AG04450 (cell line): ENCODE measurements at regions of chr18 and their contacts with region 1.

Region 1: GRCh38 chr18:38367473-38367872 is 801.9 kb upstream of the CELF4 start:
- DNase-seq: no peak
- H3K4me3 ChIP-seq: no peak overlapping the region
- H3K27ac ChIP-seq: no peak overlapping the region
- H3K27me3 ChIP-seq: no peaks in the 10 kb centered on the region
- CTCF ChIP-seq: no peak

Region 2: DNA sequence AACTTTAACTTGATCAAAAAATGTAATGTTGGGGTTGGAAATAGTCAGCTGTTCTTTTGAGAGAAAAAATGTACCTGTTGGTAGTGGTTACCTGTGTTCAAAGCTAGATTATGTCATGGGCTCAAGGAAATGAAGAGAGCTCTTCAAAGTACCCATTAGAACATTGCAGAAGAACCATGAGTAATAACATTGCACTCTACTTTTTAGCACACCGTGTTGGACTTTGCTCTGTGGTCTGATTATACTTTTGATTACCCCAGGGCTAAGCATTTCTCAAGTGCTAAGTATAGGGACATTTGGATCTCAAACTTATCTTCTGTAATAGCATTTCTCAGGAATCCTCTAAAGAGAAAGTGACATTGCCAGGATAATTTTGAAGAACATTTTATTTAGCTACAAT is 320.9 kb after region 1 on chr18:
- CTCF ChIA-PET with region 1: interaction called, 12 read pairs
- POLR2A ChIA-PET with region 1: no interaction called
- DNase-seq: no peak
- H3K4me3 ChIP-seq: no peak overlapping the region
- H3K27ac ChIP-seq: no peak overlapping the region
- H3K27me3 ChIP-seq: no peaks in the 10 kb centered on the region
- CTCF ChIP-seq: no peak